PC-3 (cell line): ENCODE measurements at regions of chr3 and their contacts with region 1.

Region 1: DNA sequence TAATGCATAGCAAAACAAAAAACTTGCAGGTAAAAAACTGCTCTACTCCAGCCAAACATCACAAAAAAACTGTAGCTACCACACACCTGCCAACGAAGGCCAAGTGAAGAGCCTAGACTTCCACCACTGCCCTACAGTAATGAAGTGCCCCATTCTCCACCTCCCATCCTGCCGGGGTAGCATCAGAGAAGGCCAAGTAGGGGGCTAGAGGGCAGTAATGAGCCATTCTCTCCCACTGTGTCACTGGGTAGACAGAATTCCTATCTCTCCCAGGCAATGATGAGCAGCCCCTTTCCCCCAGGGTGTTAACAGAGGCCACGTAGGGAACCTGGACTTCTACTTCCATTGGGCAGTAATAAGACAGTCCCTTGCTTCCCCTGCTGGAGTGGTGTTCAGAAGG is 9.5 kb downstream of the SEC22C start:
- DNase-seq: peak; percentile 72
- ATAC-seq: peak; percentile 100
- H3K4me3 ChIP-seq: no peak overlapping the region
- H3K27ac ChIP-seq: no peak overlapping the region
- H3K4me1 ChIP-seq: no peaks in the 10 kb centered on the region
- H3K27me3 ChIP-seq: no peaks in the 10 kb centered on the region
- CTCF ChIP-seq: peak; percentile 82

Region 2: DNA sequence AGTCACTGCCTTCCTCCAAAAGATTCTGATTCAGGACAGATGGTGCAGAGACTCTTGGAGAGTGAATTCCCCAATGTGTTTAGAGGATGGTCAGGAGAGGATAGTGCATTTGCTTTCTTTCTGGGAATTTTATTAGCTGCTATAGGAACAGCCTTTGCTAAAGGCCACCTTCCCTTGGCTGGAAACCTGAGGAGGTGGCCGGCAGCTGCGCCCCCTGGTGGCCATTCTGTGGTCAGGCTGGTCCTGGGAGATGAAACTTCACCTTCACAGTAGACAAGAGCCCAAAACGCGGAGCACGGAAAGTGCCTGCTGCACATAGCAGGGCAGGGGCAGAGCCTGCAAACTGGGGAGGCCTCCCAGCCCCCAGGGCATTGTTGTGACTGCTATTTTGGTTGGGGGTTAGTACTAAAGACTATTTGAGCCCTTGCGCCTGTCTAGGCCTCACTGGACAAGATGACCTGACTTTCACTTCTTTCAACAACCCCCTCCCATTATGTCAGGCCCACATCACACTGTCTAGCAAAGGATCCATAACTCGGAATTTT is 24.8 kb before region 1 on chr3:
- CTCF ChIA-PET with region 1: no interaction called
- POLR2A ChIA-PET with region 1: no interaction called
- intact Hi-C with region 1: no loop called
- DNase-seq: peak; percentile 76
- ATAC-seq: peak; percentile 61
- H3K4me3 ChIP-seq: no peak overlapping the region
- H3K27ac ChIP-seq: no peak overlapping the region
- H3K4me1 ChIP-seq: peaks cover 15% of the 10 kb centered on the region
- H3K27me3 ChIP-seq: no peaks in the 10 kb centered on the region
- CTCF ChIP-seq: peak; percentile 98

Region 3: GRCh38 chr3:42613462-42613861 is 41.2 kb after region 1 on chr3:
- CTCF ChIA-PET with region 1: no interaction called
- POLR2A ChIA-PET with region 1: no interaction called
- intact Hi-C with region 1: loop called (anchors 5 kb)
- DNase-seq: peak; percentile 53
- ATAC-seq: peak; percentile 74
- H3K4me3 ChIP-seq: no peak overlapping the region
- H3K27ac ChIP-seq: no peak overlapping the region
- H3K4me1 ChIP-seq: no peaks in the 10 kb centered on the region
- H3K27me3 ChIP-seq: no peaks in the 10 kb centered on the region
- CTCF ChIP-seq: peak; percentile 71

Region 4: DNA sequence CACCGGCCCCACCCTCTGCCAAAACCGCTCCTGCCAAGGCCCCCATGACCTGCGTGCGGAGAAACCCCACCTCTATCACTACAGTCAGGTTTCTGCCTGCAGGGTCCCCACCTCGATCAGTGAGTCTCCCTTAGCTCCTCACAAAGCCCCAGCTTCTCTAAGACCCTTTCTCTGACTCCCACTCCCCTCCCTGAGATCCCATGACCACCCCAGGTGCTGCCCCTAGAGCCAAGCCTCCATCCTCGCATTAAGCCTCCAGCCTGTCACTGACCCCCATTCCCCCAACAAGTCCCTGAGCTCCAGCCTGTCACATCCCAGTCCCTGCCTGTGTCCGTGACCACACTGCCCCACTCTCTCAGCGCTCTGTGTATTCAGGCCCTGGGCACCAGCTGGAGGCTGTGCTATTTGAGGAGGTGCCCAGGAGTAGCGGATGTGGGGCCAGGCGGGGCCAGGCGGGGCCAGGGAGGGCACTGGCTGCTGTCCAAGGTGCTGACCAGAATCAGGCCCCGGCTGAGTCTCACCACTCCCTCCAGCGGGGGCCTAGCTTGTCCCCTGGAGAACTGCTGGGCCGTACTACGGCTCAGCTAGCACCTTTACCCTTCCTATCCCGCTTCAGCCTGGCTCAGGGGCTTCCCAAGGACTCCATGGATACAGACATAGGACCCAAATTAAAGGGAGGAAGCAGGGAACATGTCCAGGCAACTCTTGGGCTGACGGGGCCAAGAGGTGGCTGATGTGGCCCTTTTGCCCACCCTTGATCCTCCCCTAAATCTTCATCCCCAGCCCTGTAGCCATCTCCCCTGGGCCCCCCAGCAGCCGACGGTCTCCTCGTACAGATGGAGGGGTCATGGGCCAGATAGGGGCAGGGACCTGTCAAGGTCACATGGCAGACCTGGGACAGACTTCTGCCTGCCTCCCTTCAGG is 129.1 kb after region 1 on chr3:
- CTCF ChIA-PET with region 1: no interaction called
- POLR2A ChIA-PET with region 1: no interaction called
- intact Hi-C with region 1: no loop called
- DNase-seq: peak; percentile 49
- ATAC-seq: peak; percentile 63
- H3K4me3 ChIP-seq: no peak overlapping the region
- H3K27ac ChIP-seq: no peak overlapping the region
- H3K4me1 ChIP-seq: 0 out of 2 replicates have a peak, but pooled peaks cover 6% of the 10 kb centered on the region
- H3K27me3 ChIP-seq: no peaks in the 10 kb centered on the region
- CTCF ChIP-seq: no peak